Activated B cell treated with CpG ODN at 0.5 μM for 24 hours (primary cell): ENCODE measurements at regions of chr20 and their contacts with region 1.

Region 1: GRCh38 chr20:58650776-58651558 is at the start of gene STX16:
- DNase-seq: peak; percentile 79
- ATAC-seq: peak; percentile 82
- H3K4me3 Mint-ChIP-seq: peak within 1 kb of the TSS; percentile 97
- H3K27ac Mint-ChIP-seq: peak within 1 kb of the TSS; percentile 93
- H3K4me1 Mint-ChIP-seq: peaks cover 20% of the 10 kb centered on the region
- H3K27me3 Mint-ChIP-seq: no peaks in the 10 kb centered on the region
- CTCF ChIP-seq: no peak
- total RNA-seq, gene STX16: 71.4 and 77.4 TPM in 2 replicates

Region 2: DNA sequence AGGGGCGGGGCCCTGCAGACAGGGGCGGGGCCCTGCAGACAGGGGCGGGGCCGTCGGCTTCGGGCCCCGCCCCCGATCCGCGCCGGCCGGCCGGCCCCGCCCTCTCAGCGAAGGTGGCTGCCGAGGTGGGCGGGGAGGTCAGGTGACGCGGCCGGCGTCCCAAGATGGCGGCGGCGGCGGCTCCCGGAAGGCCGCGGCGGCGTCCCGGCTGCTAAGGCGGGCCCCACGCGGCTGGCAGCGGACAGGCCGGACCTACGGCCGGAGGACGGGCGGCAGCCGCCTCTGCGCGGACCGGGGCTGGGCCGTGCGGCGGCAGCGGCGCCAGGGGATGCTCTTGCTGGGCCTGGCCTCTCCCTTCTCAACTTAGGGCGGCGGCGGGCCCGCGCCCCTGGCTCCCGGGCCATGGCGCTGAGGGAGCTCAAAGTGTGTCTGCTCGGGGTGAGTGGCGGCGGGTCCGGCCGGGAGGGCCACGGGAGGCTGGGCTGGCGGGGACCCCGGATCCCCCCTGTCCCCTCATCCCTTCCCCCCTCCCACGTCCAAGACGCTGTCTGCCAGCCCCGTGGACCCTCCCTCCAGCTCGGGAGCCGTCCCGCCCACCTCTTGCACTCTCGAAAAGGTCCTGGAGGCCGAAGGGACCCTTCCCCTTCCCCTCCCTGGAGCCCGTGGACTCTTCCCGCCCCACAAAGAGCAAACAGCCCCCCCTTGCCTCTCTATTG is 341.2 kb before region 1 on chr20 and contains the start of gene RAB22A:
- CTCF ChIA-PET with region 1: interaction called, 3 read pairs
- POLR2A ChIA-PET with region 1: interaction called, 27 read pairs
- intact Hi-C with region 1: loop called (anchors 1 kb)
- DNase-seq: peak; percentile 85
- ATAC-seq: peak; percentile 61
- H3K4me3 Mint-ChIP-seq: peak within 1 kb of the TSS; percentile 94
- H3K27ac Mint-ChIP-seq: peak within 1 kb of the TSS; percentile 94
- H3K4me1 Mint-ChIP-seq: peaks cover 58% of the 10 kb centered on the region
- H3K27me3 Mint-ChIP-seq: no peaks in the 10 kb centered on the region
- CTCF ChIP-seq: no peak
- total RNA-seq, gene RAB22A: 14.4 and 15.7 TPM in 2 replicates

Region 3: GRCh38 chr20:58612121-58612691 is 38.8 kb before region 1 on chr20:
- CTCF ChIA-PET with region 1: no interaction called
- POLR2A ChIA-PET with region 1: no interaction called
- intact Hi-C with region 1: no loop called
- DNase-seq: no peak
- ATAC-seq: no peak
- H3K4me3 Mint-ChIP-seq: no peak overlapping the region
- H3K27ac Mint-ChIP-seq: no peak overlapping the region
- H3K4me1 Mint-ChIP-seq: no peaks in the 10 kb centered on the region
- H3K27me3 Mint-ChIP-seq: peaks cover 10% of the 10 kb centered on the region
- CTCF ChIP-seq: no peak

Region 4: GRCh38 chr20:58634521-58635278 is 16.3 kb before region 1 on chr20:
- CTCF ChIA-PET with region 1: no interaction called
- POLR2A ChIA-PET with region 1: interaction called, 13 read pairs
- intact Hi-C with region 1: loop called (anchors 1 kb)
- DNase-seq: peak; percentile 23
- ATAC-seq: peak; percentile 84
- H3K4me3 Mint-ChIP-seq: peak overlapping the region; percentile 80
- H3K27ac Mint-ChIP-seq: peak overlapping the region; percentile 46
- H3K4me1 Mint-ChIP-seq: peaks cover 14% of the 10 kb centered on the region
- H3K27me3 Mint-ChIP-seq: peaks cover 22% of the 10 kb centered on the region
- CTCF ChIP-seq: no peak

Region 5: GRCh38 chr20:58888521-58889333 is 237.8 kb after region 1 on chr20:
- CTCF ChIA-PET with region 1: interaction called, 3 read pairs
- POLR2A ChIA-PET with region 1: interaction called, 4 read pairs
- intact Hi-C with region 1: loop called (anchors 2 kb)
- DNase-seq: peak; percentile 73
- ATAC-seq: peak; percentile 45
- H3K4me3 Mint-ChIP-seq: peak overlapping the region; percentile 84
- H3K27ac Mint-ChIP-seq: peak overlapping the region; percentile 59
- H3K4me1 Mint-ChIP-seq: peaks cover 27% of the 10 kb centered on the region
- H3K27me3 Mint-ChIP-seq: no peaks in the 10 kb centered on the region
- CTCF ChIP-seq: no peak

Region 6: GRCh38 chr20:59159493-59160376 is 508.8 kb after region 1 on chr20:
- CTCF ChIA-PET with region 1: no interaction called
- POLR2A ChIA-PET with region 1: interaction called, 5 read pairs
- intact Hi-C with region 1: loop called (anchors 5 kb)
- DNase-seq: no peak
- ATAC-seq: peak; percentile 33
- H3K4me3 Mint-ChIP-seq: peak overlapping the region; percentile 65
- H3K27ac Mint-ChIP-seq: peak overlapping the region; percentile 37
- H3K4me1 Mint-ChIP-seq: peaks cover 57% of the 10 kb centered on the region
- H3K27me3 Mint-ChIP-seq: no peaks in the 10 kb centered on the region
- CTCF ChIP-seq: no peak